ENCODE measurements at regions of chr7 and their contacts with region 1.

Region 1: DNA sequence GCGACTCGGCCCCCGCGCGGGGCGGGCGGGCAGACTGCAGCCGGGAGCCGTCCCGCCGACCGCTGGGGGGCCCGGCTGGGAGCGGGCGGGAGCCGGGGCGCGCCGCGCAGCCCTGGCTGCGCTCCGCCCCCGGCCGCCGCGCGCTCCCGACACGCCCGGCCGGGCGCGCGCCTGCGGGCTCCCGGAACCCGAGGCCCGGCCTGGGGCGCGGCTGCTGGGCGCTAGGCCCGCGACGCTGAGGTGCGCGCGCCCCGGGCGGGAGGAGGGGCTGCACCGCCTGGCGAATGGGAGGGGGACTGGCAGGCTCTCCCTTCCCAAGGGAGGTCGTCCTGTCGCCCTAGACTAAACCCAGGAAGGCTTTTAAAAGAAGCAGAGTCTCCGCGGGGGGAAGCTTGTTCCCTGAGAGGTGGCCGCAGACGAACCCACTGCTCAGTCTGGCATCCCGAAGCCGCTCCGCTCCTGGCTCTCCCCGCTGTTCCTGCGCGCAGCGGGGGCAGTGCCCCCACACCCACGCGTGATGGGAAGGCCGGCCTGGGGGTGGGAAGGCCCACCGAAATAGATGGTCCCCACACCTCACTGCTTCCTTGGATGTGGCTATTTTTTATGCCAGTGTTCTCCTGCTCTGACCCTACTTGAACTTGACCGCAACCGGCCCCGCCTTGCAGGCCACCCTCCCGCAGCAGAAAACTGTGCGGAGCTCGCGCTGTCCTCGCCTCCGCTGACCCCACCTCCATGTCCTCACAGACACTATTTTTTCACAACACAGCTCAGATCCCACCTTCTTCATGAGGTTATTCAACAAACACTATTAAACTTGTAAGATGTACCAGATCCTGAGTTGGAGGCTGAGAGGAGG is at the start of gene VOPP1:
- DNase-seq: peak; percentile 26 to 82
- H3K4me3 ChIP-seq: peak within 1 kb of the TSS; percentile 85 to 97
- H3K27ac ChIP-seq: peak within 1 kb of the TSS; percentile 91 to 93
- H3K4me1 ChIP-seq: peaks cover 11 to 44% of the 10 kb centered on the region in 2 donors
- H3K27me3 ChIP-seq: no peaks in the 10 kb centered on the region
- CTCF ChIP-seq: peak in 1 of 3 experiments; percentile 38
- total RNA-seq, gene VOPP1: 78.8 TPM

Region 2: DNA sequence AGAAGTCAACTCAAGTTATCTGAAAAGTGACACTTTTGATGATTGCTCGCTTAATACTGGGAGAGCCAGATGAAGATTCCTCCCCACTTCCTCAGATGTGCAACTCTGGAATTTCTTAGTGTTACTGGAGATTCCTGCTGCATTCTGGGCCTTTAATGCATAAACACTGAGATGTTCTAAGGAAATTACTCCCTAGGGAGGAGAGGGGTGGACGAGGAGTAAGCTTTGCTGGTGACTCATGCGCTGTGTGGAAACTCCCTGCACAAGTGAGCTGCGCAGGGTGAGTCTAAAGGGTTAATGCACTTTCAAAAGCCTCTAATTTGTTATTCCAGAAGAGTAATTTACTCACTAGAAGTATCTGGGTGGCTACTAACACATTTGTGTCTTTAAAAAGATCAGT is 507.5 kb before region 1 on chr7:
- intact Hi-C with region 1: loop called (anchors 10 kb)
- DNase-seq: no peak
- H3K4me3 ChIP-seq: peak overlapping the region in 1 of 2 donors; percentile 9
- H3K27ac ChIP-seq: peak overlapping the region; percentile 73 to 77
- H3K4me1 ChIP-seq: peaks cover 4 to 38% of the 10 kb centered on the region in 2 donors
- H3K27me3 ChIP-seq: no peaks in the 10 kb centered on the region
- CTCF ChIP-seq: no peak

Region 3: DNA sequence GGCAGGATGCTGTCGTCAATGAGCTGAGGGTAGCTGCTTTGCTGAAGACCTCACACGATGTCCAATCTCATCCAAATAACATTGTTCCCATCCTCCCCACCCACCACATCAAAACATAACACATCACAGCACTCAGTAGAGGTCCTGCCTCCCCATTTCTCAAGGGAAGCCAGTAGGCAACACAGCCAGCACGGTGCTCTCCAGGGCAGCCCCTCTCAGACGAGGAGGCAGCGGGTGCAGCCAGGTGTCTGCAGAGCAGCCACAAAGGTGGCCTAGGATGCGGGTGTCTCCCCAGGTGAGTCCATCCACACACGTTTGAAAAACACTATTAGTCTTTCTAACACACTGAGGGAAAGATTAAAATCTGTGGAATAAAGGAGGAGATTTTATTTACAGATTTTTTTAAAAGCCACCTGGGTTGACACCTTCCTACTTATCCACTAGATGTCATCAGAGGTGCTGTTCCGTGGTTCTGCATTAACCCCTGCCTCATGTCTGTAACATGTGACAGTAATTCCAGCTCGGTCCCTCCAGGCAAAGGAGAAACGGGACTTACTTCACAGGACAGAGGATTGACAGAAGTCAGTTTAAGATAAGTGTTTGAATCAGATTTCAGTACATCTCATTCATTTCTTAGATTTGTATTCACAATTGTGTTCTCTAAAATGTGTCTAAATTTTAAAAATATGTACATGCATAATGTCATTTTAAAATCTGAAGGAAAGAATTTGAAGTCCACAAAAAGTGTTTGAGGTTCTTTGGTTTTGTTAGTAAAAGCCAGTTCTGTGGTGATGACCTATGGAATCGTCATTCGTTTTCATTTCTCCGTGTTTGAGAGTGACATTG is 139.4 kb before region 1 on chr7:
- intact Hi-C with region 1: no loop called
- DNase-seq: no peak
- H3K4me3 ChIP-seq: no peak overlapping the region
- H3K27ac ChIP-seq: no peak overlapping the region
- H3K4me1 ChIP-seq: no peaks in the 10 kb centered on the region
- H3K27me3 ChIP-seq: no peaks in the 10 kb centered on the region
- CTCF ChIP-seq: peak in 2 of 3 experiments; percentile 10 to 23

Region 4: DNA sequence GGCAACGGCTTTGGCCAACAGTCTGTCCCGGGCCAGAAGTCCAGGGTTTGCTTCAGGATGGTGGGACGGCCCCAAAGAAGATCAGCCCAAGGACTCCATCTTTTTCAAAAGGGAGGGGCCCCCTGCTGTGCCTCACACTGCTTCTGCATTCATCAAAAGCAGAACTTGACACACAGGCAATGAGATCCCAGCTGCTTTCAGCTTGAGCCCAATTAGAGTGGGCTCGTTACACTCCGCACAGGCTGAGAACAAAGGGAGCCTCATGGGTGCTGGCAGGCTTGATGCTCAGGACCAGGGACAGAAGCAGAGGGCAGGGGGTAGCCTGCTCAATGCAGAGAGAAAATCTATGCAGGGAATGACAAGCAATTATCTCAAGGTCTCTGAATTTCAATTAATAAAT is 45.8 kb before region 1 on chr7:
- intact Hi-C with region 1: loop called (anchors 10 kb)
- DNase-seq: no peak
- H3K4me3 ChIP-seq: no peak overlapping the region
- H3K27ac ChIP-seq: no peak overlapping the region
- H3K4me1 ChIP-seq: peaks cover 13 to 20% of the 10 kb centered on the region in 2 donors
- H3K27me3 ChIP-seq: no peaks in the 10 kb centered on the region
- CTCF ChIP-seq: no peak

Region 5: DNA sequence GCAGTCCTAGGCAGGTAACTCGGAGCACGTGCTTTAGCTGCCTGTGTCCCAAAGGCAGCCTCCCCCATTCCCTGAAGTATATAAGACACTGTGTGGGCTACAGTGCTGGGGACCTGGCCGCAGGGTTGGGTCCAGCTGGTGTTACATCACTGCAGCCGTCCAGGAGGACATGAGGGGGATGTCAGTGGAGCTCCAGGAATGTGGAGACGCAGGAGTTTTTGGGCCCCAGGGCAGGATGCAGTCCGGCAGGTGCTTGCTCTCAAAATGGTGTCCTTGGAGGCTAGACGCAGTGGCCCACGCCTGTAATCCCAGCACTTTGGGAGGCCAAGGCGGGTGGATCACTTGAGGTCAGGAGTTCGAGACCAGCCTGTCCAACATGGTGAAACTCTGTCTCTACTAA is 302.6 kb after region 1 on chr7:
- intact Hi-C with region 1: no loop called
- DNase-seq: no peak
- H3K4me3 ChIP-seq: no peak overlapping the region
- H3K27ac ChIP-seq: no peak overlapping the region
- H3K4me1 ChIP-seq: no peaks in the 10 kb centered on the region
- H3K27me3 ChIP-seq: no peaks in the 10 kb centered on the region
- CTCF ChIP-seq: no peak

Region 6: DNA sequence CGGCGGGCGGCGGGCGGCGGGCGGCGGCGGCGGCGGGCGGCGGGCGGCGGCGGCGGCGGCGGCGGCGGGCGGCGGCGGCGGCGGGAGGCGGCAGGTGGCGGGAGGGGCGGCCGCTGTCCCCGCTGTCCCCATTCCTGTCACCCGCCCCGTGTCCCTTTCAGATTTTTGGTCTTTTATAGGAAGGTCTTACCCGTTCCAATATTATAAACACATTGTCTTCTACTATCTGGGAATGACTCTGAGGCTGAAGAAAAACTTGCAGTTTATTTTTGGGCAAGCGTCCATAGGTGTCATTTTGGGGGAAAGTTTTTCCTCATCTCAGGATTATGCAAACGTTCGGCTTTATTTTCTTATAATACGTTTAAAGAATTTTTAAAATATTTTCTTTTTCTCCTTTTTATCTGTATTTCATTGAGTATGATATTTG is 315.2 kb after region 1 on chr7:
- intact Hi-C with region 1: loop called (anchors 5 kb)
- DNase-seq: no peak
- H3K4me3 ChIP-seq: peak overlapping the region; percentile 59 to 75
- H3K27ac ChIP-seq: peak overlapping the region in 1 of 2 donors; percentile 65
- H3K4me1 ChIP-seq: peaks cover 0 to 8% of the 10 kb centered on the region in 2 donors
- H3K27me3 ChIP-seq: no peaks in the 10 kb centered on the region
- CTCF ChIP-seq: no peak

Region 7: DNA sequence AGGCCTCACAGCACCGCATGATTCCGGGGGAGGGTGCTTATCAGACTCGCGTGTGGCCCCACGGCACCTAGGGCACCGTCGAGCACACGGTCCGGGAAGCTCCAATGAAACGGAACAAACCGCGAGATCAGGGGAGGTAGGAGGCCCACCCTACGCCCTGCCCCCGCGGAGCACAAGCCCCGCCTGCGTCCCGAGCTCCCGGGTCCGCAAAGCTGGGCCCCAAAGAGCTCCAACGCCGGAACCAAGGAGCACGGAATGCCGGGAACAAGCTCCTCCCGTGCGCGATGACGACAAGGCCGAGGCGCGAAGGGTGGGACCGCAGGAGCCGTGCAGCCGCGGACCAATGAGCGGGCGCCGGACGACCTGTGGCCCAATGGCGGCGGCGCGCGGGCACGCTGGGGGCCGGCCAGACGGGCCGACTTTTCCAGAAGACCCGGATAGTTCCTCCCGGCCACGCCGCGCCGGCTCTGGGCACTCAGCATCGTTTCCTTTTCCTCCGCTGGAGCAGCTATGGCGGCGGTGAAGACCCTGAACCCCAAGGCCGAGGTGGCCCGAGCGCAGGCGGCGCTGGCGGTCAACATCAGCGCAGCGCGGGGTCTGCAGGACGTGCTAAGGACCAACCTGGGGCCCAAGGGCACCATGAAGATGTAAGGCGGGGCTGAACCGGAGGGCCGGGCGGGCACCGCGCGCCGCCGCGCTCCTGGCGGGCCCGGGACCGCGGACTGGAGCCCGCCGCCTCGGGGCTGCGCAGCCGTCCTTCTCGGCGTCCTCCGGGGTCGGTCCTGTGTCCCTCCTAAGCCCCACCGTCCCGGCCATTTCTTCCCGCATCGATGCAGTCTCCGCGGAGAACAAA is 479.0 kb after region 1 on chr7 and contains the starts of genes CCT6A and PSPH:
- intact Hi-C with region 1: loop called (anchors 5 kb)
- DNase-seq: peak; percentile 87 to 99
- H3K4me3 ChIP-seq: peak within 1 kb of the TSS; percentile 94
- H3K27ac ChIP-seq: peak within 1 kb of the TSS; percentile 92 to 95
- H3K4me1 ChIP-seq: peaks cover 0 to 26% of the 10 kb centered on the region in 2 donors
- H3K27me3 ChIP-seq: no peaks in the 10 kb centered on the region
- CTCF ChIP-seq: no peak
- total RNA-seq, gene CCT6A: 86.2 TPM
- total RNA-seq, gene PSPH: not detected

Region 8: DNA sequence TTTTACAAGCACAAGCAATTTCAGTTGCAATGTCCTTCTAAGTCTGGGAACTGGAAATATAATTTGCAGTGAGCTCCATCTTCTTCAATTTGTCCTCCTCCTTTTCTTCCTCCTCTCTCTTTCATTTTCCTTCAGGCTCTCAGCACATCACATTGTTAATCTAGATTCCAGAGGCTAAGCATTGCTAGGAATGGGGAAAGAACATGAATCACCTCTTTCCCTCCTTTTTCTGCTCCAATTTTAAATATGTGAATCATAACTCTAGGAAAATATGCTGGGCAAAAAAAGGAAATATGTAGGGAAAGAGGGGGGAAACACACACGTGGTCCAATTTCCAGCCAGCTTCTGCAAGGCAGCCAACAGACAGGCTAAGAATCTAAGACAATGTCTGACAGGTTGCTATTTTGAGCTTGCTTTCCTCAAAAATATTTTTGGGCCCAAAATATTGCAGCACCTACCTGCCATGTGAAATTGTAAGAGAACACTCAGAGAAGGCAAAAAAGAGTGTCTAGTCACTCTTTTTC is 616.3 kb after region 1 on chr7:
- intact Hi-C with region 1: loop called (anchors 10 kb)
- DNase-seq: peak in 1 of 2 donors; percentile 74
- H3K4me3 ChIP-seq: no peak overlapping the region
- H3K27ac ChIP-seq: peak overlapping the region; percentile 76 to 78
- H3K4me1 ChIP-seq: peaks cover 4 to 17% of the 10 kb centered on the region in 2 donors
- H3K27me3 ChIP-seq: no peaks in the 10 kb centered on the region
- CTCF ChIP-seq: no peak

Measured in ascending aorta (tissue), 2 donors.